ENCODE measurements at regions of chr5 and their contacts with region 1.

Region 1: DNA sequence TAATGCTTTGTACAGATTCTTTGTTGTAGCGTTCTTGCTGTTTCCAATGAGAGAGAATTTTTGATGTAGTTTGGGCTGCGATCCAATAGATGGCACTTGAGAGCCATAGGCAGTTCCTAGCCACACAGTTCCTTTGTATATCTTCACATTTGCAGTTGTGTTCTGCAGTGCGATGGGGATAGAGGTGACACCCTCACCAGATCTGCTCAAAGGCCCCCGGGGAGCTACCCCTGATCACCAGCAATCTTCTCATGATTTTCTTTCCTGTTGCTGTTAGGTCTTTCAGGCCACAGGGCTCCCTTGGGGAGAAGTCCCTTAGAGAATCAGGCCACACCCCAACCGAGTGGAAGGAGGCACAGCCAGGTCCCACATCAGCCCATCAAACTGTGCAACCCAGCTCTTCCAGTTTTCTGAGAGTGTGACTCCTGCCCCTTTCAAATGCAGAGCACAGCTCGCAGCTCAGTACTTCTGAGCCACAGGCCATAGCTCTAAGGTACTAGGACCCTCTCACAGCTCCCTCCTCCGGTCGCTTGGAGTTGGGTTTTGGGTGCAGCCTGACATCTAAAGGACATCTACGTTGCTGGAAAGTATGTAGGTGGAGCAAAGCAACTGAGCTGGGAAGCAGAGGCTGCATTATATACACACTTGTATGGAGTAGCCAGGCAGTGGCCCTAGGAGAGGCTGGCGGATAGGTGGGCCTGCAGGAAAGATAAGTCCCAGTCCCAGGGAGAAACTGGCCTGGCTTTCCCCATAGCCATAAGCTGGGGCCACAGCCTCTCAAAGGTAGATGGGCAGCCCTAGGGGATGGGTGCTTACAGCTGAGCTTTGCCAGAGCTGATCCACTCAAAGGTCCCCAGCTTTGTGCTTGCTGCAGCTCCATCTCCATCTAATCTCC is 353.5 kb downstream of the SLCO4C1 start:
- DNase-seq: peak; percentile 27
- ATAC-seq: peak; percentile 93
- H3K4me3 ChIP-seq: no peak overlapping the region
- H3K27ac ChIP-seq: no peak overlapping the region
- H3K4me1 ChIP-seq: no peaks in the 10 kb centered on the region
- H3K27me3 ChIP-seq: no peaks in the 10 kb centered on the region
- CTCF ChIP-seq: peak; percentile 87
- EP300 ChIP-seq: no peak
- POLR2A ChIP-seq: no peak
- RAD21 ChIP-seq: peak; percentile 70

Region 2: GRCh38 chr5:101977729-101978345 is 35.3 kb after region 1 on chr5:
- CTCF ChIA-PET with region 1: interaction called, 13 read pairs
- POLR2A ChIA-PET with region 1: no interaction called
- in situ Hi-C with region 1: no loop called
- intact Hi-C with region 1: loop called (anchors 1 kb)
- DNase-seq: peak; percentile 49
- ATAC-seq: peak; percentile 57; the same call in 1 of the 3 replicates
- H3K4me3 ChIP-seq: no peak overlapping the region
- H3K27ac ChIP-seq: no peak overlapping the region
- H3K4me1 ChIP-seq: no peaks in the 10 kb centered on the region
- H3K27me3 ChIP-seq: no peaks in the 10 kb centered on the region
- CTCF ChIP-seq: peak; percentile 73
- EP300 ChIP-seq: no peak
- POLR2A ChIP-seq: no peak
- RAD21 ChIP-seq: peak; percentile 38; the same call in 1 of the 2 replicates

Region 3: GRCh38 chr5:102090770-102091381 is 148.3 kb after region 1 on chr5:
- CTCF ChIA-PET with region 1: interaction called, 7 read pairs
- POLR2A ChIA-PET with region 1: no interaction called
- in situ Hi-C with region 1: no loop called
- intact Hi-C with region 1: loop called (anchors 1 kb)
- DNase-seq: peak; percentile 77
- ATAC-seq: peak; percentile 100
- H3K4me3 ChIP-seq: no peak overlapping the region
- H3K27ac ChIP-seq: no peak overlapping the region
- H3K4me1 ChIP-seq: peaks cover 8% of the 10 kb centered on the region
- H3K27me3 ChIP-seq: no peaks in the 10 kb centered on the region; a peak in 1 of 5 replicates
- CTCF ChIP-seq: peak; percentile 81
- EP300 ChIP-seq: no peak
- POLR2A ChIP-seq: no peak
- RAD21 ChIP-seq: peak; percentile 73

Region 4: DNA sequence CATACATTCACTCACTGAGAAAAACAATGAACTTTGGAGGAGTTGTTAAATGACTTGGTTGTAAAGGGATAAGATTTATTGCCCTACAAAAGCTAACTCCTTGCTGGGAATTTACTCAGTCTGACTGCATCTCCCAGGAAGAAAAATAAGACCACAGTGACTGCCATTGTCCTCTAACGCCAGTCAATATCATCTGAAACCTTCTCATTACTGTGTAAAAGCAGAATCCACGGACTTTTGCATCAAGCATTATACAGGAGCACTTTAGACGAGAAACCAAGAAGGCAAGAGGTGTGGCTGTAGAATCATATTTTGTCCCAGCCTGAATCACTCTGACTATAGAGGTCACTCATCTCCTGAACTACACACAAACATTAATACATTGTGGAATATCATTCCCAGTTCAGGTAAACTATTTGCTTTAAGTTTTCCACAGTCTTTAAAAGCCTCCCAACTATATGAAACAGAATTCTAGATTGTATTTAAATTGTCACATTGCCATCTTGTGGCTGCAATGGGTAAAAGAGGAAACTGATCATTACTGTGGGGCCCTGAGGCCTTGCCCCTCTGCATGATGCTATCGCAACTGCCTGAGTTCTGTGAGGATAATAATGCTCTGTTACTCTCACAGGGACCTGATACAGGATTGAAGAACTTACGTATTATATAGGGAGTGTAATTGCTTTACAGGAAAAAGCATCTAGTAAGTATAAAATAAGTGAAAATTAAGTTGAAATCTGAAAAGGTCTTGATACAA is 210.6 kb after region 1 on chr5:
- CTCF ChIA-PET with region 1: interaction called, 17 read pairs
- POLR2A ChIA-PET with region 1: no interaction called
- in situ Hi-C with region 1: loop called (anchors 5 kb)
- intact Hi-C with region 1: loop called (anchors 1 kb)
- DNase-seq: peak; percentile 48
- ATAC-seq: peak; percentile 98
- H3K4me3 ChIP-seq: no peak overlapping the region
- H3K27ac ChIP-seq: no peak overlapping the region
- H3K4me1 ChIP-seq: peaks cover 20% of the 10 kb centered on the region
- H3K27me3 ChIP-seq: no peaks in the 10 kb centered on the region
- CTCF ChIP-seq: peak; percentile 81
- EP300 ChIP-seq: no peak
- POLR2A ChIP-seq: no peak
- RAD21 ChIP-seq: peak; percentile 58

Region 5: GRCh38 chr5:102229685-102230084 is 287.1 kb after region 1 on chr5:
- CTCF ChIA-PET with region 1: interaction called, 17 read pairs
- POLR2A ChIA-PET with region 1: no interaction called
- in situ Hi-C with region 1: loop called (anchors 5 kb)
- intact Hi-C with region 1: no loop called
- DNase-seq: no peak
- ATAC-seq: no peak
- H3K4me3 ChIP-seq: no peak overlapping the region
- H3K27ac ChIP-seq: no peak overlapping the region
- H3K4me1 ChIP-seq: no peaks in the 10 kb centered on the region
- H3K27me3 ChIP-seq: no peaks in the 10 kb centered on the region
- CTCF ChIP-seq: no peak
- EP300 ChIP-seq: no peak
- POLR2A ChIP-seq: no peak
- RAD21 ChIP-seq: no peak

Region 6: GRCh38 chr5:102296178-102296817 is 353.7 kb after region 1 on chr5 and contains the start of gene SLCO4C1:
- CTCF ChIA-PET with region 1: no interaction called
- POLR2A ChIA-PET with region 1: no interaction called
- in situ Hi-C with region 1: no loop called
- intact Hi-C with region 1: loop called (anchors 5 kb)
- DNase-seq: peak; percentile 70
- ATAC-seq: peak; percentile 97
- H3K4me3 ChIP-seq: peak within 1 kb of the TSS; percentile 47 to 90 (median 84)
- H3K27ac ChIP-seq: peak within 1 kb of the TSS; percentile 61
- H3K4me1 ChIP-seq: peaks cover 32% of the 10 kb centered on the region
- H3K27me3 ChIP-seq: no peaks in the 10 kb centered on the region
- CTCF ChIP-seq: peak; percentile 99
- EP300 ChIP-seq: peak in 1 of 2 experiments; percentile 19; a peak in 1 of 4 replicates
- POLR2A ChIP-seq: no peak; a peak in 2 of 4 replicates
- RAD21 ChIP-seq: peak; percentile 69
- total RNA-seq, gene SLCO4C1: 7.8 and 9.6 TPM in 2 replicates